Activated naive CD4-positive, alpha-beta T cell treated with anti-CD3 and anti-CD28 coated beads for 36 hours (primary cell): ENCODE measurements at regions of chr13 and their contacts with region 1.

Region 1: DNA sequence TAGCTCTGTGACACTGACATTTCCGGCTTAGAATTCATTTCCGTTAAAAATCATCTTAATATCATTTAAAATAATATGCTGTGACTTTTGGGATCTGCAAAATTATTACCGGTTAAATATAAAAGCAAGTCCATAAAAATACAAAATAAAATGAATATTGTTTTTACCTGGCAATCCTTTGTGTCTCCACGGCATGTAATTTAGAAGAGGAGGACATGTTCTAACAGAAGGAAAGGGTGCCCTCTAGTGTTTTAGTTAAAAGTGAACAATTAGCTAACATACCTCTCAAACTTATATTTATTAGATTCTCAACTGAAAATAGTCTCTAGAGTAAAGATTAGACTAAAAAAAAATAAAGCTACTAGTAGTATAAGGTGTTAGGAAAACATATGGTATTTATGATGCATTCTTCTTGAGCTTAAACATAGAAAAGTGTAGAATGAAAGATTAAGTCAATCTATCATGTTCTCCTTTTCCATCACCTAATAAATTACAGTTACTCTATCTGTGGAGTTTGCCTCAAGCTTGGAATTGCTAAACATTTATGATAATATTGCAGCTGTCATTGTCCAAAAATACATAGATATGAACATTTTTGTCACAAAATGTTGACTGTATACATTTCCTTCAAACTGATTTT is 676.7 kb upstream of the SPRY2 start:
- DNase-seq: no peak
- H3K4me3 Mint-ChIP-seq: no peak overlapping the region
- H3K27ac Mint-ChIP-seq: no peak overlapping the region
- H3K4me1 Mint-ChIP-seq: no peaks in the 10 kb centered on the region
- H3K27me3 Mint-ChIP-seq: no peaks in the 10 kb centered on the region

Region 2: DNA sequence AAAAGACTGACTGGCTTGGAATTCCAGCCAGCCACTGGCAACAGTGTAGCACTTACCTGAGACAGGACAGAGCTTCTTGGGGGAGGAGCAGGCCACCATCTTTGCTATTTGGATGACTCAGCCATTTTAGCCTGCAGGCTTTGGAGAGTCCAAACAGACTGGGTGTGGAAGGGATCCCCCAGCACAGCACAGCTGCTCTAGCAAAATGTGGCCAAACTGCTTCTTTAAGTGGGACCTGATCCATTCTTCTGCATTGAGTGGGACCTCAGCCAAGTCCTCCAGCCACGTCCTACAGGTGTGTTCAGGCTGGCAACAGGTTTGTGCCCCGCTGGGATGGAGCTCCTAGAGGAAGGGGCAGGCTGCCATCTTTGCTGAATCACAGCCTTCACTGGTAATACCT is 1456.7 kb before region 1 on chr13:
- CTCF ChIA-PET with region 1: no interaction called
- intact Hi-C with region 1: loop called (anchors 10 kb)
- DNase-seq: no peak
- H3K4me3 Mint-ChIP-seq: no peak overlapping the region
- H3K27ac Mint-ChIP-seq: no peak overlapping the region
- H3K4me1 Mint-ChIP-seq: no peaks in the 10 kb centered on the region
- H3K27me3 Mint-ChIP-seq: no peaks in the 10 kb centered on the region

Region 3: GRCh38 chr13:80342471-80343380 is 674.9 kb before region 1 on chr13:
- CTCF ChIA-PET with region 1: no interaction called
- intact Hi-C with region 1: loop called (anchors 5 kb)
- DNase-seq: peak; percentile 64
- H3K4me3 Mint-ChIP-seq: peak overlapping the region; percentile 57
- H3K27ac Mint-ChIP-seq: no peak overlapping the region
- H3K4me1 Mint-ChIP-seq: peaks cover 8% of the 10 kb centered on the region
- H3K27me3 Mint-ChIP-seq: peaks cover 48% of the 10 kb centered on the region

Region 4: GRCh38 chr13:80979035-80979641 is 38.5 kb before region 1 on chr13:
- CTCF ChIA-PET with region 1: interaction called, 5 read pairs
- intact Hi-C with region 1: loop called (anchors 1 kb)
- DNase-seq: peak; percentile 50
- H3K4me3 Mint-ChIP-seq: no peak overlapping the region
- H3K27ac Mint-ChIP-seq: no peak overlapping the region
- H3K4me1 Mint-ChIP-seq: no peaks in the 10 kb centered on the region
- H3K27me3 Mint-ChIP-seq: no peaks in the 10 kb centered on the region

Region 5: DNA sequence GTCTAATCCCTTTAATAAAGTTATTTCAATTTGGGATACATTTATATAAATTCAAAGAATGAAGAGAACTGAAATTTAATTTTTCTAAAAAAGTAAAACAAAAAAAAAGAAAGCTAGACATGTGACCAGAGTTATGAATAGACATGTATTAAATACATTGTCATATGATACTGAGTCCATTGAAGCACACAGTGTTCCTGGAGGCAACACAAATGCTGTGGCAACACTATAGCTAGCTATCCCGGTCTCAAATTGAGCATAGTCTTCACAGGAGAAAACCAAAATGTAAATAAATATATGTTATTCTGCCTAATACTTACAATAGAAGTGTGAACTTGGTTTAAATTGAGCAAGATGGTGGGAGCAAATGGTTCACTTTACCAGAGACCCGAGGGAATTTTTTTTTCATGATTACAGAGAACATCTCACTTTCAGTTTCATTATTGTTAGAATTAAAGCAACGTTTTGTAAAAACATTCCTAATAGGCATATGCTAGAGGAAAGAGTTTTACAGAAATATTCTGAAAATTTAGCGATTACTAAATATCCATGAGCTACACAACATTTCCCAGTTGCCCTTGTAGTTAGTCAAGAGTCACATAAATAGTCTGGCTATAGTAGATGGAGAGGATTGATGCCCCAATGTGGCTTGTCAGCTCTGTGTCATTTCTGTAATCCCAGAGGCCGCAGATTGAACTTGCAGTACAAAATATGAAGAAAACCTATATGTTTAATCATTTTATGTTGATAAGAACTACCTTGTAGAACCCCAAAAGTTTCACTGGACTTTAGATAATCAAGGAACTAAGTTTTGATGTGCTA is 99.0 kb after region 1 on chr13:
- CTCF ChIA-PET with region 1: no interaction called
- intact Hi-C with region 1: no loop called
- DNase-seq: no peak
- H3K4me3 Mint-ChIP-seq: no peak overlapping the region
- H3K27ac Mint-ChIP-seq: no peak overlapping the region
- H3K4me1 Mint-ChIP-seq: no peaks in the 10 kb centered on the region
- H3K27me3 Mint-ChIP-seq: no peaks in the 10 kb centered on the region